ENCODE measurements at regions of chr2 and their contacts with region 1.

Region 1: GRCh38 chr2:112054847-112055729 is at the start of gene TMEM87B:
- DNase-seq: peak; percentile 92 to 99 (median 96)
- H3K4me3 ChIP-seq: peak within 1 kb of the TSS; percentile 61 to 87
- H3K4me3 Mint-ChIP-seq: peak within 1 kb of the TSS; percentile 94 to 99 (median 96)
- H3K27ac ChIP-seq: peak within 1 kb of the TSS; percentile 82
- H3K27ac Mint-ChIP-seq: peak within 1 kb of the TSS; percentile 80 to 100 (median 99)
- H3K4me1 ChIP-seq: peaks cover 35% of the 10 kb centered on the region
- H3K4me1 Mint-ChIP-seq: peaks cover 36 to 51% (median 43%) of the 10 kb centered on the region in 4 donors
- H3K27me3 ChIP-seq: no peaks in the 10 kb centered on the region
- H3K27me3 Mint-ChIP-seq: no peaks in the 10 kb centered on the region
- total RNA-seq, gene TMEM87B: 28.6 to 28.7 TPM

Region 2: DNA sequence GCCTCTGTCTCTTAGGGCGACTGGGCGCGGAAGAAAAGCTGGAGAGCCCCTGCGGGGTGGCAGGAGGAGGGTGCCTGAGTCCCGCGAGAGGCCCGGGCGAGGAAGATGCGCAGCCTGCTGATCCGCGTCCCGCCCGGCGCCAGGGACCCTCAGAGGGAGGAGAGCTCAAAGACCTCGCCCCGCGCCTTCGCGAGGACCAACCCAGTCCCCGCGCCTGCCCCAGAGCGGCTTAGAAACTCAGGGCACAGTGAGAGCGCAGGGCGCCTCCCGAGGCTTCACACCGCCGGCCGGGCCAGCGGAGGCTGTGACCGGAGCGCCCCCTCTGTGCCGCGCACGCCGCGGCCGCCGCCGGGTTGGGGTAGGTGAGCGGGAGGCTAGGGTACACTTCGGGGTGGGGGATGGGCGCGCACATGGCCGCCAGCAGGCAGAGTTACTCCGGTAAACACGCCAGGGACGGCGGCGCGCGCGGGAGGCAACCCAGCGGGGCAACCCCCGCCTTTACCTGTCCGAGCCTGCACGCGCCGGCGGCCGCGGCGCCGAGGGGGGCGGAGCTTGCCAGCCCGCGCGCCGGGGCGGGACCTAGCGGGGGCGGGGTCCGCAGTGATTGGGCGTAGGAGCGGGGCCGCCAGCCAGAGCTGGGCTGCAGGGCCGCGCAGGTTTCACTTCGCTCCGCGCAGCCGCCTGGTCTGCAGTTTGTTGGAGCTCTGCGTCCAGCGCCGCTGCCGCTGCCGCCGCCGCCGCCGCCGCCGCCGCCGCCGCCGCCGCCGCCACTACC is 934.6 kb before region 1 on chr2 and contains the start of gene BCL2L11:
- CTCF ChIA-PET with region 1: no interaction called
- POLR2A ChIA-PET with region 1: interaction called, 6 read pairs
- intact Hi-C with region 1: loop called (anchors 5 kb)
- DNase-seq: peak; percentile 85 to 91 (median 87)
- H3K4me3 ChIP-seq: peak within 1 kb of the TSS; percentile 78 to 83
- H3K4me3 Mint-ChIP-seq: peak within 1 kb of the TSS; percentile 88 to 97 (median 94)
- H3K27ac ChIP-seq: peak within 1 kb of the TSS; percentile 32
- H3K27ac Mint-ChIP-seq: peak within 1 kb of the TSS; percentile 82 to 95 (median 89)
- H3K4me1 ChIP-seq: peaks cover 47% of the 10 kb centered on the region
- H3K4me1 Mint-ChIP-seq: peaks cover 21 to 59% (median 37%) of the 10 kb centered on the region in 4 donors
- H3K27me3 ChIP-seq: peaks cover 36% of the 10 kb centered on the region
- H3K27me3 Mint-ChIP-seq: peaks cover 19 to 35% of the 10 kb centered on the region in 2 donors
- total RNA-seq, gene BCL2L11: 33.4 to 34.1 TPM

Region 3: DNA sequence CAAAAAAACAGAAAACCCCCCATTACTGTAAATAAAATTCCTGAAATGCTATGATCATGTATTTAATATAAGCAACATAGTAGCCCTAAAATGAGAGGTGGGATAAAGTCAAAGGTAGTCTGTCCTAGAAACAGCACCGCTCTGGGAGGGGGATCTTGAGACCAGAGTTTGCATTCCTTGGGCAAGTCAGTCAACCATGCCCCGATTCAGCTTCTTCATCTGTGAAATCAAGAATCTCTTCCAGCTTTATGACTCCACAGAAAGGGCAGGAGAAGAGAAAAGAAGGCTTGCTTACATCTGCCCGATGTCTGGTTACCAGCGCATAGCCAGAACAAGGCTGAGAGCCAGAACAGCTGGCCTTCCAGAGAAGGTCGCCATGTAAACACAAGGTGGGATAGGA is 81.0 kb after region 1 on chr2:
- CTCF ChIA-PET with region 1: no interaction called
- POLR2A ChIA-PET with region 1: no interaction called
- intact Hi-C with region 1: no loop called
- DNase-seq: no peak
- H3K4me3 ChIP-seq: no peak overlapping the region
- H3K4me3 Mint-ChIP-seq: peak overlapping the region in 1 of 8 donors; percentile 33
- H3K27ac ChIP-seq: no peak overlapping the region
- H3K27ac Mint-ChIP-seq: peak overlapping the region in 2 of 7 donors; percentile 31 to 45
- H3K4me1 ChIP-seq: peaks cover 4% of the 10 kb centered on the region
- H3K4me1 Mint-ChIP-seq: peaks cover 12 to 19% (median 15%) of the 10 kb centered on the region in 4 donors
- H3K27me3 ChIP-seq: no peaks in the 10 kb centered on the region
- H3K27me3 Mint-ChIP-seq: peaks cover 16 to 20% of the 10 kb centered on the region in 2 donors

Region 4: DNA sequence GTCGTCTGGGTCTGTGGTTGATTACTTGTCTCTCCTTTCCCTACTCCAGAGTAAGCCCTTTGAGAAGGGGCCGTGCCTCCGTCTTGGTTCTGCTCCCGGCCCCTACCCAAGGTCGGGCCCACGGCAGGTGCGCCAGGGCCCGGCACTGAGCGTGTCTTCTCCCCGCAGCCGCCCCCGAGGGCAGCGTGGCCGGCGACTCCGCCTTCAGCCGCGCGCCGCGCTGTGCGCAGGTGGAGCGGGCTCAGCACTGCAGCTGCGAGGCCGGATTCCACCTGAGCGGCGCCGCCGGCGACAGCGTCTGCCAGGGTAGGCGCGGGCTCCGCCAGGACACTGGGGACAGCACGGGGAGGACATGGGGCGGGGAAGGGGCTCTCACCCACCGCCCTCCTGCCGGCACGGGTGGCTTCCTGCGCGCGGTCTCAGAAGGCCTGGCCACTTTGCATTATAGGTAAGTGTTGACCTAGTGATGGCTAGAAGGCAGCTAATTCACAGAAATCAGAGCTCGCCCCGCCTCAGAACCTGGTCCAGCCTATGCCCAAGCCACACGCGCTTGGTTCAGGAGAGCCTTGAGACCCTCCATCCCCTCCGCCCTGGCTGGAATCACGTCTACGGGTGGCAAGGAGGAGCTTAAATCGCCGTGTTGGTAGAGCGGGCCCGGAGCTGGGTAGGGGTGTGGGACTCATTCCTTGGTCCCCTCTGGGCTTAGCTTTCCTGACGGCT is 126.6 kb after region 1 on chr2:
- CTCF ChIA-PET with region 1: interaction called, 3 read pairs
- POLR2A ChIA-PET with region 1: interaction called, 12 read pairs
- intact Hi-C with region 1: no loop called
- DNase-seq: peak; percentile 72 to 79 (median 76)
- H3K4me3 ChIP-seq: peak overlapping the region; percentile 71 to 77
- H3K4me3 Mint-ChIP-seq: peak overlapping the region; percentile 87 to 94 (median 90)
- H3K27ac ChIP-seq: peak overlapping the region; percentile 72
- H3K27ac Mint-ChIP-seq: peak overlapping the region; percentile 93 to 98 (median 96)
- H3K4me1 ChIP-seq: peaks cover 54% of the 10 kb centered on the region
- H3K4me1 Mint-ChIP-seq: peaks cover 38 to 78% (median 60%) of the 10 kb centered on the region in 4 donors
- H3K27me3 ChIP-seq: no peaks in the 10 kb centered on the region
- H3K27me3 Mint-ChIP-seq: no peaks in the 10 kb centered on the region

Region 5: DNA sequence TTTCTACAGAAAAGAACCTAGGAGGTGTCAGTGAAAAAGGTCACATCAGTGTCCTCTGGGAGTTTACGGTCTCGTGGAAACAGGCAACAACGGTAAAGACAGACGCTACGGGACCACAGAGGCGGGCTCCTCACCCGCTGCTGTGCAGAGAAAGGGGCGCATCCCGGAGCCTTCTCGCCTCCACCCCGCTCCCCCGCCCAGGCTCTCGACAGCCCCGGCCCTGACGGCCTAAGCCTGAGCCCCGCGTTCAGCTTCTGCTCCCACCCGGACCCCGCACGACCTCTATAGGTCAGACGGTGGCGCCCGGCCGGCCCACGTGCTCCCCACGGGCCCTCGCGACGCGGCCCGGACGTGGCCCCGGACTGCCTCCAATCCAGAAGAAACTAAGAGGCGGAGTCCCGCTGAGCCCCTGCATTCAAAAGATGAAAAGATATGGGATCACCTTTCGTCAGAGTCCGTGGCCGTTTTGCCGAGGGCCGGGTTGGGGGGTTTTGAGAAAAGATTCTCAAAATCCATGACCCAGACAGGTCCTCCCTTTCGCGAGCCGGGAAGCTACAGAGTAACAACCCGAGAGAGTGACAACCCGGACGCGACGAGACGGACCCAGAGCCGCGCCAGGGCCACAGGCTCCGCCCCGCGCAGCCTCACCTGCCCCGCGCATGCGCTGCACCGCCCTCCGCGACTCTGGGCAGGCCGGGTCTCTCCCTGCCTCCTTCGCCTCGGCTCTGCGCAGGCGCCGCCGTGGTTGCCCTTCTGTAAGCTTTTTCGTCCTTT is 199.6 kb after region 1 on chr2 and contains the start of gene ZC3H8:
- CTCF ChIA-PET with region 1: no interaction called
- POLR2A ChIA-PET with region 1: interaction called, 7 read pairs
- intact Hi-C with region 1: loop called (anchors 2 kb)
- DNase-seq: peak; percentile 93 to 96 (median 96)
- H3K4me3 ChIP-seq: peak within 1 kb of the TSS; percentile 75 to 96
- H3K4me3 Mint-ChIP-seq: peak within 1 kb of the TSS; percentile 88 to 93 (median 91)
- H3K27ac ChIP-seq: peak within 1 kb of the TSS; percentile 92
- H3K27ac Mint-ChIP-seq: peak within 1 kb of the TSS; percentile 87 to 97 (median 96)
- H3K4me1 ChIP-seq: peaks cover 35% of the 10 kb centered on the region
- H3K4me1 Mint-ChIP-seq: peaks cover 5 to 23% (median 15%) of the 10 kb centered on the region in 4 donors
- H3K27me3 ChIP-seq: no peaks in the 10 kb centered on the region
- H3K27me3 Mint-ChIP-seq: no peaks in the 10 kb centered on the region
- total RNA-seq, gene ZC3H8: 17.9 to 18.9 TPM

Region 6: GRCh38 chr2:112542123-112542983 is 487.3 kb after region 1 on chr2 and contains the start of gene POLR1B:
- CTCF ChIA-PET with region 1: no interaction called
- POLR2A ChIA-PET with region 1: no interaction called
- intact Hi-C with region 1: loop called (anchors 1 kb)
- DNase-seq: peak; percentile 77 to 85 (median 81)
- H3K4me3 ChIP-seq: peak within 1 kb of the TSS; percentile 70 to 98
- H3K4me3 Mint-ChIP-seq: no peak within 1 kb of the TSS
- H3K27ac ChIP-seq: peak within 1 kb of the TSS; percentile 90
- H3K27ac Mint-ChIP-seq: no peak within 1 kb of the TSS
- H3K4me1 ChIP-seq: peaks cover 24% of the 10 kb centered on the region
- H3K4me1 Mint-ChIP-seq: peaks cover 5 to 12% (median 10%) of the 10 kb centered on the region in 4 donors
- H3K27me3 ChIP-seq: no peaks in the 10 kb centered on the region
- H3K27me3 Mint-ChIP-seq: no peaks in the 10 kb centered on the region
- total RNA-seq, gene POLR1B: 29.7 to 31.3 TPM

Region 7: DNA sequence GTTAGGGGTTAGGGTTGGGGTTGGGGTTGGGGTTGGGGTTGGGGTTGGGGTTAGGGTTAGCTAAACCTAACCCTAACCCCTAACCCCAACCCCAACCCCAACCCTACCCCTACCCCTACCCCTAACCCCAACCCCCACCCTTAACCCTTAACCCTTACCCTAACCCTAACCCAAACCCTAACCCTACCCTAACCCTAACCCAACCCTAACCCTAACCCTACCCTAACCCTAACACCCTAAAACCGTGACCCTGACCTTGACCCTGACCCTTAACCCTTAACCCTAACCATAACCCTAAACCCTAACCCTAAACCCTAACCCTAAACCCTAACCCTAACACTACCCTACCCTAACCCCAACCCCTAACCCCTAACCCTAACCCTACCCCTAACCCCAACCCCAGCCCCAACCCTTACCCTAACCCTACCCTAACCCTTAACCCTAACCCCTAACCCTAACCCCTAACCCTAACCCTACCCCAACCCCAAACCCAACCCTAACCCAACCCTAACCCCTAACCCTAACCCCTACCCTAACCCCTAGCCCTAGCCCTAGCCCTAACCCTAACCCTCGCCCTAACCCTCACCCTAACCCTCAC is 1547.9 kb after region 1 on chr2:
- CTCF ChIA-PET with region 1: no interaction called
- POLR2A ChIA-PET with region 1: no interaction called
- intact Hi-C with region 1: loop called (anchors 10 kb)
- DNase-seq: no peak
- H3K4me3 ChIP-seq: peak overlapping the region in 1 of 2 donors; percentile 43
- H3K4me3 Mint-ChIP-seq: peak overlapping the region; percentile 86 to 99 (median 92)
- H3K27ac ChIP-seq: peak overlapping the region; percentile 47
- H3K27ac Mint-ChIP-seq: peak overlapping the region; percentile 84 to 99 (median 95)
- H3K4me1 ChIP-seq: peaks cover 5% of the 10 kb centered on the region
- H3K4me1 Mint-ChIP-seq: peaks cover 4 to 14% (median 8%) of the 10 kb centered on the region in 4 donors
- H3K27me3 ChIP-seq: no peaks in the 10 kb centered on the region
- H3K27me3 Mint-ChIP-seq: peaks cover 0 to 4% of the 10 kb centered on the region in 2 donors